ENCODE measurements at regions of chr20 and their contacts with region 1.

Region 1: DNA sequence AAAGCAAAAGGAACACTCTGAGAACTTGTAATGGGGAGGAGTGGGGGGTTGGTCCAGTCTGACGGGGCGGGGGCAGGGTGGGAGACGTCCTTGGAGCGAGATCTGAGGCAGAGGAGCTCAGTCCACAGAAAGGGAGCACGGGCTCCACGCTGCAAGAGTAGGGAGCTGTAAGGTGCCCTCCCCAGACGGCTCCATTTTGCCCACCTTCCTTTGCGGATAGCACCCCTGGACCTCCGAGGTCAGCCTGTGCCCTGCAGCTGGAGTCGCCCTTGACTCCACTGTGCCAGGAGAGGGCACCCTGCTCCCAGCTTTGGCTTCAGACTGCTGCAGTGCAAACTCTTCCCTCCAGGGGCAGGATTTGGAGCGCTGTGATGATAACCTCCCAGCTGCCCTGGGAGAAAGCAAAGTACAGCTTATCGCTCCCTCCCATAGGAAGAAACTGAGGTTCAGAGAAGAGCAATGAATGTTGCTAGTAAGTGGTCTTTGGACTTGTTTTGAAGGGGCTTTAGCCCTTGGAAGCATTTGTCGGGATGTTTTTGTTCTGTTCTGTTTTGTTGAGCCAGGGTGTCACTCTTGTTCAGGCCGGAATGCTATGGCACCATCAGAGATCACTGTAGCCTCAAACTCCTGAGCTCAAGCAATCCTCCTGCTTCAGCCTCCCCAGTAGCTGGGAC is 9.5 kb upstream of the AHCY start:
- DNase-seq: peak; percentile 65
- ATAC-seq: peak; percentile 100
- H3K4me3 ChIP-seq: no peak overlapping the region
- H3K27ac ChIP-seq: no peak overlapping the region
- H3K4me1 ChIP-seq: peaks cover 8% of the 10 kb centered on the region; the same call in 1 of the 2 replicates
- H3K27me3 ChIP-seq: peaks cover 0 to 9% of the 10 kb centered on the region in 2 experiments; a peak in 1 of 4 replicates
- CTCF ChIP-seq: peak; percentile 100; a peak in 5 of 6 replicates
- EP300 ChIP-seq: no peak
- POLR2A ChIP-seq: no peak
- RAD21 ChIP-seq: peak; percentile 100

Region 2: DNA sequence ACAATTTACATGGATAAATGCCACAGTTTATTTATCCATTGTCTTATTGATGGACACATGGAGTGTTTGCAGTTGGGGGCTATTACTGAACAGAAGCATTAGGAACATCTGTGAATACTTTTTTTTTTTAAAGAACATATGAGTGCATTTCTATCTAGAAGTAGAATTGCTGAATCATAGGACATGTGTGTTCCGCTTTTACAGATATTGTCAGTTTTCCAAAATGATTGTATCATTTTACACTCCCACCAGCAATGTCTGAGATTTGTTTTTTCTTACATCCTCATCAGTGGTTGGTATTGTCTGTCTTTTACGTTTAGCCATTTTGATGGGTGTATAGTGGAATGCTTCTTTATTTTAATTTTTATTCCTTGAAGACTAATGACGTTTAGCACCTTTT is 113.5 kb before region 1 on chr20:
- CTCF ChIA-PET with region 1: no interaction called
- POLR2A ChIA-PET with region 1: no interaction called
- RAD21 ChIA-PET with region 1: no interaction called
- SMC1A ChIA-PET with region 1: no interaction called
- in situ Hi-C with region 1: no loop called
- intact Hi-C with region 1: no loop called
- DNase-seq: no peak
- ATAC-seq: no peak
- H3K4me3 ChIP-seq: no peak overlapping the region
- H3K27ac ChIP-seq: no peak overlapping the region
- H3K4me1 ChIP-seq: no peaks in the 10 kb centered on the region
- H3K27me3 ChIP-seq: peaks cover 0 to 2% of the 10 kb centered on the region in 2 experiments; a peak in 1 of 4 replicates
- CTCF ChIP-seq: no peak
- EP300 ChIP-seq: no peak
- POLR2A ChIP-seq: no peak
- RAD21 ChIP-seq: no peak

Region 3: DNA sequence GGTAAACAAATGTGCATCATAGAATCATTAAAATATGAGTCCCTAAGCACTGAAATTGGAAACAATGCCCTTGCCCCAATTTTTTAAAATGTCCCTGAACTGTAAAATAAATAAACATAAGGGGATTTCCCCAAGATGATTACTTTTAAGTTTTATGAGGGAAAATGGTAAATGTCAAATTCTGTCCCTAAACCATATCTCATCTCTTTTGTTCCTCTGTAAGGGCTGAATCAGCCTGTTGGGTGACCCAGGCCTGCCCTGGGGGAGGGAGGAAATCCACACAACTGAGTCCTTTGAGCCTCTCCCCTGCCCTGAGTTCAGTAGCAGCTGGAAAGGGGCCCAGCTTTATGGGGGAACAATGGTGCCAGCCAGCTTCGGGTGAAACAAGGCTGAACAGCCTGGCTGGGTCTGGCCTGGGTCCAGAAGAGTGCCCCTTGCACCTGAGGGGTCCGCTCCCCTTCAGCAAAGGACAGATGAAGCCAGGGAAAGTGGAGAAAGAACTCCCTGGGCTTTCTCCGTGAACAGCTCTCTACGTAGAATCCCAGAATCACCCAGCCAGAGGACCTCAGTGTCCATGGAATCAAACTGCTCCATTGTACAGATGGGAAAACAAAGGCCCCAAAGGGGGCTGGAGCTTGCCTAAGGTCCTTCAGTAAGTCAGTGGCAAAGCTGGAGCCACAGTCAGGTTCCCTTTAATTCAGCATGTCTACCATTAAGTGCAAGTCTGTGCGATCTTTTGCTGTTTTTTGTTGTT is 22.1 kb after region 1 on chr20:
- CTCF ChIA-PET with region 1: interaction called, 54 read pairs
- POLR2A ChIA-PET with region 1: no interaction called
- RAD21 ChIA-PET with region 1: interaction called, 27 read pairs
- SMC1A ChIA-PET with region 1: interaction called, 22 read pairs
- in situ Hi-C with region 1: no loop called
- intact Hi-C with region 1: no loop called
- DNase-seq: no peak
- ATAC-seq: no peak
- H3K4me3 ChIP-seq: no peak overlapping the region
- H3K27ac ChIP-seq: no peak overlapping the region
- H3K4me1 ChIP-seq: peaks cover 10% of the 10 kb centered on the region
- H3K27me3 ChIP-seq: no peaks in the 10 kb centered on the region
- CTCF ChIP-seq: no peak
- EP300 ChIP-seq: no peak
- POLR2A ChIP-seq: no peak
- RAD21 ChIP-seq: no peak

Region 4: DNA sequence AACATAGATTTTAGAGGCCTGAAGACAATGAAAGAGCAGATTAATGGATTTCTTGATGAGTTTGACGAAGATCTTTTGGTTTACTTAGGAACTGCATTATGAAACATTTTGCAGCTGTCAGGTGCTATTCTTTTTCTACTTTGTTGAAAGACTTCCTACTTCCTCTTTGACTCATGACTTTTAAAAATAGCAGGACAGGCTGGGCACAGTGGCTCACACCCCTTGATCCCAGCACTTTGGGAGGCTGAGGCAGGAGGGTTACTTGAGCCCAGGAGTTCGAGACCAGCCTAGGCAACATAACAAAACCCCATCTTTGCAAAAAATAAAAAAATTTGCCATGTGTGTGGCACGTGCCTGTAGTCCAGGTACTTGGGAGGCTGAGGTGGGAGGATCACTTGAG is 102.4 kb after region 1 on chr20:
- CTCF ChIA-PET with region 1: interaction called, 17 read pairs
- POLR2A ChIA-PET with region 1: interaction called, 4 read pairs
- RAD21 ChIA-PET with region 1: interaction called, 13 read pairs
- SMC1A ChIA-PET with region 1: interaction called, 9 read pairs
- in situ Hi-C with region 1: no loop called
- intact Hi-C with region 1: no loop called
- DNase-seq: peak; percentile 39
- ATAC-seq: peak; percentile 85
- H3K4me3 ChIP-seq: no peak overlapping the region
- H3K27ac ChIP-seq: peak overlapping the region; percentile 76
- H3K4me1 ChIP-seq: peaks cover 20% of the 10 kb centered on the region
- H3K27me3 ChIP-seq: no peaks in the 10 kb centered on the region
- CTCF ChIP-seq: no peak
- EP300 ChIP-seq: peak; percentile 40 to 46; a peak in 1 of 4 replicates
- POLR2A ChIP-seq: no peak
- RAD21 ChIP-seq: no peak

Region 5: GRCh38 chr20:34452281-34452982 is 139.8 kb after region 1 on chr20:
- CTCF ChIA-PET with region 1: interaction called, 18 read pairs
- POLR2A ChIA-PET with region 1: interaction called, 3 read pairs
- RAD21 ChIA-PET with region 1: interaction called, 10 read pairs
- SMC1A ChIA-PET with region 1: interaction called, 6 read pairs
- in situ Hi-C with region 1: no loop called
- intact Hi-C with region 1: no loop called
- DNase-seq: no peak
- ATAC-seq: no peak
- H3K4me3 ChIP-seq: no peak overlapping the region
- H3K27ac ChIP-seq: no peak overlapping the region
- H3K4me1 ChIP-seq: no peaks in the 10 kb centered on the region
- H3K27me3 ChIP-seq: no peaks in the 10 kb centered on the region
- CTCF ChIP-seq: no peak
- EP300 ChIP-seq: no peak
- POLR2A ChIP-seq: no peak
- RAD21 ChIP-seq: no peak

Region 6: GRCh38 chr20:34516247-34517113 is 203.8 kb after region 1 on chr20 and contains the start of gene DYNLRB1:
- CTCF ChIA-PET with region 1: interaction called, 61 read pairs
- POLR2A ChIA-PET with region 1: interaction called, 9 read pairs
- RAD21 ChIA-PET with region 1: interaction called, 45 read pairs
- SMC1A ChIA-PET with region 1: interaction called, 35 read pairs
- in situ Hi-C with region 1: loop called (anchors 5 kb)
- intact Hi-C with region 1: no loop called
- DNase-seq: peak; percentile 68
- ATAC-seq: peak; percentile 91
- H3K4me3 ChIP-seq: peak within 1 kb of the TSS; percentile 82
- H3K27ac ChIP-seq: peak within 1 kb of the TSS; percentile 78
- H3K4me1 ChIP-seq: peaks cover 7% of the 10 kb centered on the region; the same call in 1 of the 2 replicates
- H3K27me3 ChIP-seq: no peaks in the 10 kb centered on the region
- CTCF ChIP-seq: no peak
- EP300 ChIP-seq: no peak
- POLR2A ChIP-seq: peak; percentile 90
- RAD21 ChIP-seq: no peak
- polyA plus RNA-seq, gene DYNLRB1: 185 to 189 TPM

Region 7: GRCh38 chr20:34558320-34559218 is 245.9 kb after region 1 on chr20 and contains the start of gene MAP1LC3A:
- CTCF ChIA-PET with region 1: interaction called, 5 read pairs
- POLR2A ChIA-PET with region 1: no interaction called
- RAD21 ChIA-PET with region 1: interaction called, 10 read pairs
- SMC1A ChIA-PET with region 1: no interaction called
- in situ Hi-C with region 1: no loop called
- intact Hi-C with region 1: no loop called
- DNase-seq: no peak
- ATAC-seq: peak; percentile 85
- H3K4me3 ChIP-seq: peak within 1 kb of the TSS; percentile 61
- H3K27ac ChIP-seq: 0 out of 2 replicates have a peak within 1 kb of the TSS, but pooled peaks have one; percentile 22
- H3K4me1 ChIP-seq: no peaks in the 10 kb centered on the region
- H3K27me3 ChIP-seq: no peaks in the 10 kb centered on the region
- CTCF ChIP-seq: no peak
- EP300 ChIP-seq: no peak
- POLR2A ChIP-seq: peak; percentile 57
- RAD21 ChIP-seq: no peak
- polyA plus RNA-seq, gene MAP1LC3A: not detected

Region 8: GRCh38 chr20:34768096-34768495 is 455.4 kb after region 1 on chr20:
- CTCF ChIA-PET with region 1: interaction called, 83 read pairs
- POLR2A ChIA-PET with region 1: interaction called, 7 read pairs
- RAD21 ChIA-PET with region 1: interaction called, 58 read pairs
- SMC1A ChIA-PET with region 1: interaction called, 30 read pairs
- in situ Hi-C with region 1: loop called (anchors 5 kb)
- intact Hi-C with region 1: loop called (anchors 5 kb)
- DNase-seq: no peak
- ATAC-seq: no peak
- H3K4me3 ChIP-seq: no peak overlapping the region
- H3K27ac ChIP-seq: no peak overlapping the region
- H3K4me1 ChIP-seq: no peaks in the 10 kb centered on the region; the same call in 1 of the 2 replicates
- H3K27me3 ChIP-seq: no peaks in the 10 kb centered on the region
- CTCF ChIP-seq: no peak
- EP300 ChIP-seq: no peak
- POLR2A ChIP-seq: no peak
- RAD21 ChIP-seq: no peak

Measured in GM12878 (cell line).